ENCODE measurements at regions of chr19 and their contacts with region 1.

Region 1: GRCh38 chr19:3434712-3435553 is 45.4 kb downstream of the SMIM24 start:
- DNase-seq: peak; percentile 90 to 98 (median 95)
- ATAC-seq: peak; percentile 95
- H3K4me3 ChIP-seq: peak overlapping the region; percentile 72 to 93
- H3K4me3 Mint-ChIP-seq: peak overlapping the region; percentile 97
- H3K27ac ChIP-seq: peak overlapping the region; percentile 66 to 98
- H3K27ac Mint-ChIP-seq: peak overlapping the region; percentile 97
- H3K4me1 ChIP-seq: peaks cover 9% of the 10 kb centered on the region
- H3K4me1 Mint-ChIP-seq: peaks cover 14% of the 10 kb centered on the region
- H3K27me3 ChIP-seq: no peaks in the 10 kb centered on the region
- H3K27me3 Mint-ChIP-seq: no peaks in the 10 kb centered on the region
- CTCF ChIP-seq: no peak

Region 2: GRCh38 chr19:3284759-3285646 is 149.9 kb before region 1 on chr19:
- CTCF ChIA-PET with region 1: interaction called, 4 read pairs
- POLR2A ChIA-PET with region 1: no interaction called
- intact Hi-C with region 1: loop called (anchors 1 kb)
- DNase-seq: peak; percentile 20 to 87 (median 66)
- ATAC-seq: peak; percentile 80
- H3K4me3 ChIP-seq: peak overlapping the region; percentile 20
- H3K4me3 Mint-ChIP-seq: peak overlapping the region; percentile 47
- H3K27ac ChIP-seq: no peak overlapping the region
- H3K27ac Mint-ChIP-seq: no peak overlapping the region
- H3K4me1 ChIP-seq: peaks cover 15% of the 10 kb centered on the region
- H3K4me1 Mint-ChIP-seq: peaks cover 13% of the 10 kb centered on the region
- H3K27me3 ChIP-seq: peaks cover 0 to 2% of the 10 kb centered on the region in 2 experiments
- H3K27me3 Mint-ChIP-seq: peaks cover 7% of the 10 kb centered on the region
- CTCF ChIP-seq: no peak

Region 3: DNA sequence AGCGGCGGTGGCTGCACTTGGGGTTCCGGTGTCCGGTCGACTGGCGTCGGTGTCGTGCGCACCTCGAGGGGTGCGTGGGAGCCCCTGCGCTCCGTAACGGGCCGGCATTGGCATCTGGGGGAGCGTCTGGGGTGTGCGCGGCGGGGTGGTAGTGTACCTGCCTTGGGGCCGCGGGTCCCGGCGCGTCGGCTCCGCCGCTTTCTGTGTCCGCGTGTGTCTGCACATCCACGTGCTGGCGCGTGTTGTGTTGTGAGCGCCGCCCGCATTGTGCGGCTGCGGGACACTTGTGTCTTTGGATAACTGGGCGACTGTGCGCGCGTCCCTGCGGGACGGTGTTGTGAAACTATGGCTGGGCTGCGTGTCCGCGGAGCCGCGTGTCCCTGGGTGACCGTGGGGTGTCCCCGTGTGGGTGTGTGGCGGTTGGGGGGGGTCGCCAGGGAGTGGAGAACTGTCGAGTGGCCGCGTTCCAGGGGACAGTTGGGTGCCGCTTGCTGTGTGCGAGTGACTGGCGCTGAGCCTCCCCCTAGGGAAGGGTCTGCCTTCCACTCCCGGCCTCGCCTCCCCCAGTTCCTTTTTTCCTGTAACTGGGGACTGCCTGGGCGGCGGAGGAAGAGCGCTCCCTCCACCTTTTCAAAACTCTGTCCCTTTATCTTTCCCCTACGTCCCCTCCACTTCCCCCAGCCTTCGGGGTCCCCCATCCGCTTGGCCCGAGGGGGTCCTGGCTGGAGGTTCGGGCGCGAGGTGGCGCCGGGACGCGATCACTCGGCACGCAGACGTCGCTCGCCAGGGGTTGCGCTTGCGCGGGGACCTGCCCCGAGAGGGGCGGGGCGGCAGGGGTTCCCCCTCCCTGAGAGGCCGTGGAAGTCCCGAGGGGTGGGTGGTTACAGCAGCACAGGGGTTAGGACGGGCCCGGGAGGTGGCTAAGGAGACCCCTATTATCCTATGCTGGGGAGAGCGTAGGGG is 74.2 kb before region 1 on chr19:
- CTCF ChIA-PET with region 1: interaction called, 4 read pairs
- POLR2A ChIA-PET with region 1: no interaction called
- intact Hi-C with region 1: loop called (anchors 1 to 2 kb)
- DNase-seq: peak; percentile 35 to 90 (median 74)
- ATAC-seq: peak; percentile 55
- H3K4me3 ChIP-seq: peak overlapping the region; percentile 66 to 69
- H3K4me3 Mint-ChIP-seq: peak overlapping the region; percentile 90
- H3K27ac ChIP-seq: peak overlapping the region; percentile 38 to 63
- H3K27ac Mint-ChIP-seq: peak overlapping the region; percentile 91
- H3K4me1 ChIP-seq: peaks cover 31% of the 10 kb centered on the region
- H3K4me1 Mint-ChIP-seq: peaks cover 57% of the 10 kb centered on the region
- H3K27me3 ChIP-seq: no peaks in the 10 kb centered on the region
- H3K27me3 Mint-ChIP-seq: no peaks in the 10 kb centered on the region
- CTCF ChIP-seq: no peak

Region 4: GRCh38 chr19:3505598-3506383 is 70.9 kb after region 1 on chr19 and contains the start of gene FZR1:
- CTCF ChIA-PET with region 1: interaction called, 4 read pairs
- POLR2A ChIA-PET with region 1: no interaction called
- intact Hi-C with region 1: loop called in 1 of 2 experiments (anchors 1 kb)
- DNase-seq: peak; percentile 99 to 100 (median 100)
- ATAC-seq: peak; percentile 85
- H3K4me3 ChIP-seq: peak within 1 kb of the TSS; percentile 76 to 83
- H3K4me3 Mint-ChIP-seq: peak within 1 kb of the TSS; percentile 85
- H3K27ac ChIP-seq: peak within 1 kb of the TSS; percentile 97
- H3K27ac Mint-ChIP-seq: peak within 1 kb of the TSS; percentile 97
- H3K4me1 ChIP-seq: peaks cover 36% of the 10 kb centered on the region
- H3K4me1 Mint-ChIP-seq: peaks cover 48% of the 10 kb centered on the region
- H3K27me3 ChIP-seq: no peaks in the 10 kb centered on the region
- H3K27me3 Mint-ChIP-seq: no peaks in the 10 kb centered on the region
- CTCF ChIP-seq: no peak
- total RNA-seq, gene FZR1: 130 to 142 TPM

Region 5: DNA sequence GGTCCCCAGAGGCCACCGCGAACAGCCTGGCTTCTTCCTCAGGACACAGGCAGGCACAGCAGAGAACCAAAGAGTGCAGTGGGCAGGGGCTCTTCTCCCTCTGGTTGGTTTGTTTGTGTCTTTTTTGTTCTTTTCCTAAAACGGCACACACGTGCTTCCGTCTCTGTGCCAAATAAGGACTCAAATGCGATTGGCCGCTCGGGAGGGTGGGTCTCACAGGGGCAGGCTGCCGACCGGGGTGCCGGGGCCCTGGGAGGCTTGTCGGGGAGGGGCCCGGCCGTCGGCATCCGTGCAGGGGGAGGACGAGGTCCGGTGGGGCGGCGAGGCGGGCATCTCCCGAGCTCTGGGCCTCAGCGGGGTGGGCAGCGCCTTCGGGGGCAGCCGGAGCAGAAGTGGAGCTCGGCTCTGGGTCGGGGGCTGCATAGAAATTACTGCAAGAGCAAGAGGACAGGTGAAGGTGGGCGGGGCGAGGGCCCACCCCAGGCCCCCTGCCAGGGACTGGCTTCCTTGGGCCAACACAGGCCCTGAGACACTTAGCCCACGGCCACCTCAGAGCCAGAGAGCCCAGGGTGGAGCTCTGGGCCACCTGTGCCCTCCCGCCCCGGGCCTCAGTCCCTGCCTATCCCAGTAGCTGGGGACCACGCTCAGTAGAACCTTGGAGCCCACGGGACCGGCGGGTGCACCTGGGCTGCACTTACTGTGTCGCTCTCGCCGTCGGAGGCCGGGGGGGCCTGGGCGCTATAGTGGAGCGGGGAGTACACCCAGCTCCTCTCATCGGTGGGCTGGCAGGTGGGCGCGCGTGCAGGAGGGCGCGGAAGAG is 198.0 kb after region 1 on chr19:
- CTCF ChIA-PET with region 1: no interaction called
- POLR2A ChIA-PET with region 1: no interaction called
- intact Hi-C with region 1: no loop called
- DNase-seq: no peak
- ATAC-seq: no peak
- H3K4me3 ChIP-seq: no peak overlapping the region
- H3K4me3 Mint-ChIP-seq: no peak overlapping the region
- H3K27ac ChIP-seq: no peak overlapping the region
- H3K27ac Mint-ChIP-seq: no peak overlapping the region
- H3K4me1 ChIP-seq: no peaks in the 10 kb centered on the region
- H3K4me1 Mint-ChIP-seq: no peaks in the 10 kb centered on the region
- H3K27me3 ChIP-seq: no peaks in the 10 kb centered on the region
- H3K27me3 Mint-ChIP-seq: no peaks in the 10 kb centered on the region
- CTCF ChIP-seq: no peak

Measured in CD8-positive, alpha-beta T cell (primary cell).